Heart left ventricle (tissue), 16 donors: ENCODE measurements at regions of chr14 and their contacts with region 1.

Region 1: DNA sequence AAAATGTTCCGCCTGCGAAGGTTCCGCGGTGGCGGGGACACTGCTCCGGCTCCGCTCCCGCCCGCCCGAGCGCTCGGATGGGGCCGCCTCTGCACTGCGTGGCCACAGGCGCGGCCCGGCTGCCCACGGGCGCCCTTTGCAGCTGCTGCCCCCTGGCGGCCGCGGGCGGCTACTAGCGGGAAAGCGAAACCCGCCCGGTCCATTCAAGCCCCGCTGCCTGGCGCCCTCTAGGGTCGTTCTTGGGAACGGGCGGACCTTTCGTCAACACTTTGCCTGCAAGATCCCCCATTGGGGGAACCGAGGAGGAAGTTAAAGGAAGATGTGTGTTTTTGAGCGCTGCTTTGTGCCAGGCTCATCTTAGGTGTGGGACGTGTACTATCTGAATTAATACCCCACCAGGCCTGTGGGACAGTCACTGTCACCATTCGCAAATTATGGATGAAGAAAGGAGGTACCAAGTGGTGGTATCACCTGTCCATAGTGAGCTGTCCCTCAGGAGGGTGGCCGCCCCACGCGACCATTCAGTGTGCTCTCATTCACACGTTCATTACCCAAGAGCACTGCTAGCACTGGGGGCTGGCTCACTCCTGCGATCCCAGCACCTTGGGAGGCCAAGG is 19.4 kb downstream of the GPR132 start:
- DNase-seq: peak; percentile 88 to 96 (median 89)
- ATAC-seq: peak; percentile 67 to 94 (median 90)
- H3K4me3 ChIP-seq: peak overlapping the region in 4 of 12 donors; percentile 4 to 22 (median 17)
- H3K27ac ChIP-seq: no peak overlapping the region
- H3K4me1 ChIP-seq: peaks cover 0 to 12% (median 0%) of the 10 kb centered on the region in 12 donors
- H3K27me3 ChIP-seq: peaks cover 0 to 12% (median 0%) of the 10 kb centered on the region in 9 donors
- CTCF ChIP-seq: peak in 10 of 12 donors; percentile 99 to 100 (median 100)
- POLR2A ChIP-seq: no peak

Region 2: DNA sequence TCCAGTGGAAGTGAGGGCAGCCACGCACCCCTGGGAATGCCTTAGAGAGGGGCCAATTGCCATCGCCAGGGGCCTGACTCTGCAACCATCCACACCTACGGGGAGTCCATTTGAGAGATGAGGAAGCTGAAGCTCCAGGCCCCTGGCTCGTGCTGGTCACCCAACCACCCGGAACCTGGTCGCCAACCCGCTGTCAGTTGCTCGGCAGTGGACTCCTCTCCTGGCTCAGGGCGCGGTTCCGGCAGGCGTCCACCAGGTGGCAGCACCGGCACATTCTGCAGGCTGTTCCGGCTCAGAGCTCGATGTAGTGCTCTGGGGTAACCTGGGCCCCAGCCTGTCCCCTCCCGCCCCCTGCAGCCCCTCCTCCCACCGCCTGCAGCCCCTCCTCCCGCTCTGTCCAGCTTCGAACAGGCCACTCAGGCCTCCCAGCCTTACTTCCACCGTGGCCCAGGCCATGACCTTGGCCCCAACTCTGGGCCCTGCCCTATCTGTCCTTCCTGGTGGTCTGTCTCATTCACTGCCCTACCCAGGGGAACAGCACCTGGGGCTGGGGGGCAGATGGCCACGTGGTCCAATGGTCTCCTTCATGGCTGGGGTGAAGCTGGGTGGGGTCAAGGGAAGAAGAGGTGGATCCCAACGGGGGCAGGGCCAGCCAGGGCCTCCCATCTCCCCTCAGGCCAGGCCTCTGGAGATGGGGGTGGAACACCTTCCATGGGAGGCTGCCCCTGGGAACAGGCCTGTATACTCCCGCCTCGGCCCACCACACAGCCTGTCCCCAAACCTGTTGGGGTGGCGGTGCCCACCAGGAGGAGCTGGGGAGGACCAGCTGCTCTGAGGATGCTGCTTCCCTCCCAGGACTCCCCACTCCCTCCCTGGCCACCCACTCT is 277.1 kb before region 1 on chr14:
- intact Hi-C with region 1: loop called in 1 of 10 experiments (anchors 10 kb)
- DNase-seq: peak; percentile 86 to 95 (median 89)
- ATAC-seq: peak; percentile 85 to 92 (median 89)
- H3K4me3 ChIP-seq: no peak overlapping the region
- H3K27ac ChIP-seq: peak overlapping the region in 6 of 12 donors; percentile 10 to 51 (median 29)
- H3K4me1 ChIP-seq: peaks cover 0 to 12% (median 9%) of the 10 kb centered on the region in 12 donors
- H3K27me3 ChIP-seq: no peaks in the 10 kb centered on the region
- CTCF ChIP-seq: peak; percentile 92 to 98 (median 94)
- POLR2A ChIP-seq: no peak

Region 3: DNA sequence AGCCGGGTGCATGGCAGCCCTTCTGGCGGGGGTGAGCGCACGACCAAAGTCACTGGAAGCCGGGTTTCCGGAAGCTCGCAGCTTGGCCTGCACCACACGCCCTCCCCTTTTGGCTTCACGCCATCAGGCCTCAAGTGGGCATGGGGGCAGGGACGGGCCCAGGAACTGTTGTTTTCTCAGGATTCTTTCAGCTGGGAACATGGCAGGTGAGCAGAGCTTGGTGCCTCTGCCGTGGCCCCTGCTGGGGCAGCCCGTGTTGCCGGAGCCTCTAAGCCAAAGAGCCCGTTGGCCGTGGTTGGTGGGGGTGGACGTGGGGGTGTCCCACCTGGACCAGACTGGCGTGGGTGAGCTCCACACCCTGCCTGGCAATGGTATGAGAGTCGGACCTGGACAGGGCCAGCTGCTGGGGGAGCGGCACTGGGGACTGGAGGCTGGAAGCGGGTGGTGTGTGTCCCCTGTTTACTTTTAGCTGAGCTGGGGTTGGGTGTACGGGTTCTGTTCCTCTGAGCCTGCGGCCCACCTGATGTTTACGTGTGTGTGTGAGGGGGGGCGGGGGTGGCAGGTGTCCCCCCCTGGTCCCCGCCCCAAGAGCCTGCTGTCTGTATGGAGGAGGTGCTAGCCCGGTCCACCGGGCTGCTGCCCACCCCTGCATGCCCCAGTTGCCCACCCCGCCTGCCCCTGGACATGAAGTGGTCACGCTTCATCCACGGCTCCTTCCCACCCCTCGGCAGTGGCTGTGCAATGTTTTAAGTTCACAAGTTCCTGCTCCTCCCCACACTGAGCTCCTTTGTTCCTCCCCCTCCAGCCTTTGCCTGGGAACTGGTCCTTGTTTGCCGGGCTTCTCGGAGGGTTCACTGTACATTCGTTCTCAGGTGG is 149.8 kb before region 1 on chr14:
- intact Hi-C with region 1: loop called in 9 of 10 experiments (anchors 1 to 10 kb)
- DNase-seq: peak in 3 of 5 donors; percentile 14 to 60 (median 24)
- ATAC-seq: peak in 3 of 4 donors; percentile 3 to 26 (median 21)
- H3K4me3 ChIP-seq: no peak overlapping the region
- H3K27ac ChIP-seq: no peak overlapping the region
- H3K4me1 ChIP-seq: peaks cover 0 to 28% (median 12%) of the 10 kb centered on the region in 12 donors
- H3K27me3 ChIP-seq: no peaks in the 10 kb centered on the region
- CTCF ChIP-seq: no peak
- POLR2A ChIP-seq: no peak

Region 4: GRCh38 chr14:104932676-104933631 is 112.9 kb before region 1 on chr14:
- intact Hi-C with region 1: loop called in 1 of 10 experiments (anchors 1 kb)
- DNase-seq: peak; percentile 88 to 94 (median 88)
- ATAC-seq: peak; percentile 67 to 90 (median 86)
- H3K4me3 ChIP-seq: peak overlapping the region; percentile 52 to 86 (median 69)
- H3K27ac ChIP-seq: peak overlapping the region in 7 of 12 donors; percentile 19 to 76 (median 57)
- H3K4me1 ChIP-seq: peaks cover 0 to 18% (median 13%) of the 10 kb centered on the region in 12 donors
- H3K27me3 ChIP-seq: peaks cover 0 to 22% (median 5%) of the 10 kb centered on the region in 9 donors
- CTCF ChIP-seq: peak; percentile 60 to 81 (median 73)
- POLR2A ChIP-seq: no peak

Region 5: GRCh38 chr14:104976198-104977007 is 69.4 kb before region 1 on chr14:
- intact Hi-C with region 1: loop called (anchors 1 to 5 kb)
- DNase-seq: peak; percentile 81 to 92 (median 86)
- ATAC-seq: peak; percentile 54 to 72 (median 58)
- H3K4me3 ChIP-seq: no peak overlapping the region
- H3K27ac ChIP-seq: no peak overlapping the region
- H3K4me1 ChIP-seq: peaks cover 8 to 75% (median 44%) of the 10 kb centered on the region in 12 donors
- H3K27me3 ChIP-seq: peaks cover 0 to 20% (median 0%) of the 10 kb centered on the region in 9 donors
- CTCF ChIP-seq: peak; percentile 77 to 96 (median 92)
- POLR2A ChIP-seq: no peak

Region 6: DNA sequence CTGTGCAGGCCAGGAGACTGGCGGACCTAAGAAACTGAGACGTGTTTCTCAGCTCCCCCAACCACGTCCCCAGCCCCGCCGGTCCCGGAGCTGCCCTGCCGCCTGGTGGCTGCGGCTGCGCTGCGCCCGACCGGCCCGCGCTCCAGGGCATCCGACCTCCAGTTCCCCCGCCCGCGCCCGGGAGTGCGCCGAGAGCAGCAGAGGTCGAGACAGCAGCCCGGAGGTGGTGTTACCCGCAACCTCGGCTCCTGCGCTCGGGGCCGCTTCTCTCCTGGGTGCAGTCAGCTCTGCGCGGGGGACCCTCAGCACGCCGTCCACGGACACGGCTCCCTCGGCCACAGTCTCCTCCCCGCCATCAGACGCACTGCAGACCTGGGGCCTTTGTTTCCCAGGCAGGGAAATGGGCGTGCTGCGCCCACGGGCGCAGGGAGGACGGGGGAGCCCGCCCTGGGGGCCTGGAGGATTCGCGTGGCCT is 41.1 kb after region 1 on chr14:
- intact Hi-C with region 1: loop called in 1 of 10 experiments (anchors 5 kb)
- DNase-seq: peak; percentile 78 to 94 (median 82)
- ATAC-seq: peak in 3 of 4 donors; percentile 43 to 63 (median 55)
- H3K4me3 ChIP-seq: peak overlapping the region; percentile 3 to 64 (median 53)
- H3K27ac ChIP-seq: peak overlapping the region in 9 of 12 donors; percentile 28 to 74 (median 47)
- H3K4me1 ChIP-seq: peaks cover 9 to 48% (median 34%) of the 10 kb centered on the region in 12 donors
- H3K27me3 ChIP-seq: peaks cover 0 to 11% (median 0%) of the 10 kb centered on the region in 9 donors
- CTCF ChIP-seq: peak; percentile 72 to 90 (median 83)
- POLR2A ChIP-seq: no peak